Endothelial cell of umbilical vein (primary cell): ENCODE measurements at regions of chr12 and their contacts with region 1.

Region 1: GRCh38 chr12:83005534-83006197 is 319.0 kb downstream of the TMTC2 start:
- DNase-seq: no peak
- H3K4me3 ChIP-seq: no peak overlapping the region
- H3K27ac ChIP-seq: no peak overlapping the region
- H3K4me1 ChIP-seq: no peaks in the 10 kb centered on the region
- H3K27me3 ChIP-seq: no peaks in the 10 kb centered on the region
- CTCF ChIP-seq: no peak
- POLR2A ChIP-seq: no peak

Region 2: GRCh38 chr12:82527165-82527780 is 478.4 kb before region 1 on chr12:
- CTCF ChIA-PET with region 1: no interaction called
- POLR2A ChIA-PET with region 1: no interaction called
- dilution Hi-C with region 1: no loop called
- intact Hi-C with region 1: loop called (anchors 1 kb)
- DNase-seq: peak; percentile 69
- H3K4me3 ChIP-seq: no peak overlapping the region
- H3K27ac ChIP-seq: no peak overlapping the region
- H3K4me1 ChIP-seq: no peaks in the 10 kb centered on the region
- H3K27me3 ChIP-seq: no peaks in the 10 kb centered on the region
- CTCF ChIP-seq: peak; percentile 70 to 72
- POLR2A ChIP-seq: no peak

Region 3: GRCh38 chr12:84397263-84397662 is 1391.6 kb after region 1 on chr12:
- CTCF ChIA-PET with region 1: interaction called, 4 read pairs
- POLR2A ChIA-PET with region 1: no interaction called
- dilution Hi-C with region 1: no loop called
- intact Hi-C with region 1: loop called (anchors 5 kb)
- DNase-seq: peak; percentile 2
- H3K4me3 ChIP-seq: no peak overlapping the region
- H3K27ac ChIP-seq: no peak overlapping the region
- H3K4me1 ChIP-seq: no peaks in the 10 kb centered on the region
- H3K27me3 ChIP-seq: no peaks in the 10 kb centered on the region
- CTCF ChIP-seq: no peak
- POLR2A ChIP-seq: no peak

Region 4: DNA sequence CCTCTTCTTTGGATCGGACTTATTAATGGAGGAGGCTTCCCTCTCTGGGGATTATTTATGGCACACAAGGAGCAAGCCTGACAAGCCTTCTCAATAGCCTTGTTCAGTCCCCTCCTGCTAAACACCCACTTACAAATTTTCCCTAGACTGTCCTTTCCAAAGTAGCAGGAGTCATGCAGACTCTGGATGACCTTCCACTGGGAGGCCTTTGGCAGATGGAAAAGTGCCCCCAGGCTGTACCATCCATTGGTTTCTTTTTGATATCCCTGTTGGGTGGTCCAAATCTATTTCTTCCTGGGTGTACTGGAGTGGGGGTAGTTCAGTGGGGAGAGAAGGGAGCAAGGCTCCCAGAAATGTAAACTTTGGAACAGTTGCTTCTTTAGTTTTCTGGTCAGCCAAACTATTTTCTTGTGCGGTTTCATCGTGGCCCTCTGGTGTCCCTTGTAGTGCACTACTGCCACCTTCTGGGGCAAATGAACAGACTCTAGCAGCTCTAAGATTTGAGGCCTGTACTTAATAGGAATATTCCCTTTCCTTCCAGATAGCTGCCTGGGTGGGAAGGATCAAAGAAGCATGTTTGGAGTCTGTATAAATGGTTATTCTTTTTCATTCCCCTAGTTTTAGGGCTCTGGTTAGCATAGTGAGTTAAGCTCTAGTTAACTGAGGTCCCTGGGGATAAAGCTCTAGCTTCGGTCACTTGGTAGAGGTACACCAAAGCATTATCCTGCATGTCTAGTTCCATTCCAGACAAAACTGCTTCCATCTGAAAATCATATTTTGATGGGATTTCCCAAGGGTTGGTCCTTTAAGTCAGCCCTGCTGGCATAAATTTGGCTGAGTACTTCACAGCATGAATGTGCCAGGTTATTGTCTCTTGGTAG is 1497.5 kb after region 1 on chr12:
- CTCF ChIA-PET with region 1: interaction called, 4 read pairs
- POLR2A ChIA-PET with region 1: no interaction called
- dilution Hi-C with region 1: no loop called
- intact Hi-C with region 1: loop called (anchors 1 kb)
- DNase-seq: peak; percentile 45
- H3K4me3 ChIP-seq: no peak overlapping the region
- H3K27ac ChIP-seq: no peak overlapping the region
- H3K4me1 ChIP-seq: peaks cover 8% of the 10 kb centered on the region
- H3K27me3 ChIP-seq: no peaks in the 10 kb centered on the region
- CTCF ChIP-seq: peak; percentile 42 to 56
- POLR2A ChIP-seq: no peak

Region 5: DNA sequence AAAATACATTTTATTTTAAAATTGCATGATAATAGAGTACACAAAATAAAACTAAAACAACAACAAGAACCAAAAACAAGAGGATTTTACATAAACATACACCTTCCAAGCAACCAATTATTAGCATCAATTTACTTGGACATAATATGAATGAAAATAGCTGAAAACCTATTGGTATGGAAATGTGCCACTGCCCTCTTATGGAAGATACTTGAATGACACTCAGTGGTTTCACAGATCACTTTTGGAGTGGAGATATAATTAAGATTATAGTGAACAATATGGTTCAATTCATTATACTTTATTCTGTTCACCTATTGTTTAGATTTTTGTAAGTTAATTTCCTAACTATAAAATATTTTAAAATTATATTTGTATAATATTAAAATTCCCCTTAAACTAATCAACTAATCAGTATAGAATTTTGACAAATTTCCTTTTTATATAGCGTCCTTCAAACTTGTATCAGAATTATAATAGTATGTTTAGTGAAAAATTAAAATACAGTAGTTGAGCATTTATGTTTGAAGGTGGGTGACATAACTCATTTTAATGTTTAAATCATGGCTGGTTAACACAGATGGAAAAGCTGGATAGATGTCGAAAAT is 1836.8 kb after region 1 on chr12:
- CTCF ChIA-PET with region 1: no interaction called
- POLR2A ChIA-PET with region 1: no interaction called
- dilution Hi-C with region 1: no loop called
- intact Hi-C with region 1: loop called (anchors 10 kb)
- DNase-seq: peak; percentile 55
- H3K4me3 ChIP-seq: no peak overlapping the region
- H3K27ac ChIP-seq: no peak overlapping the region
- H3K4me1 ChIP-seq: no peaks in the 10 kb centered on the region
- H3K27me3 ChIP-seq: no peaks in the 10 kb centered on the region
- CTCF ChIP-seq: peak; percentile 38 to 45
- POLR2A ChIP-seq: no peak